Dendritic cell treated with granulocyte-macrophage colony-stimulating factor and Interleukin-4, amounts not matched to agents 40 ng/mL and 50 ng/mL, for 4 days (primary cell): ENCODE measurements at regions of chr11 and their contacts with region 1.

Region 1: DNA sequence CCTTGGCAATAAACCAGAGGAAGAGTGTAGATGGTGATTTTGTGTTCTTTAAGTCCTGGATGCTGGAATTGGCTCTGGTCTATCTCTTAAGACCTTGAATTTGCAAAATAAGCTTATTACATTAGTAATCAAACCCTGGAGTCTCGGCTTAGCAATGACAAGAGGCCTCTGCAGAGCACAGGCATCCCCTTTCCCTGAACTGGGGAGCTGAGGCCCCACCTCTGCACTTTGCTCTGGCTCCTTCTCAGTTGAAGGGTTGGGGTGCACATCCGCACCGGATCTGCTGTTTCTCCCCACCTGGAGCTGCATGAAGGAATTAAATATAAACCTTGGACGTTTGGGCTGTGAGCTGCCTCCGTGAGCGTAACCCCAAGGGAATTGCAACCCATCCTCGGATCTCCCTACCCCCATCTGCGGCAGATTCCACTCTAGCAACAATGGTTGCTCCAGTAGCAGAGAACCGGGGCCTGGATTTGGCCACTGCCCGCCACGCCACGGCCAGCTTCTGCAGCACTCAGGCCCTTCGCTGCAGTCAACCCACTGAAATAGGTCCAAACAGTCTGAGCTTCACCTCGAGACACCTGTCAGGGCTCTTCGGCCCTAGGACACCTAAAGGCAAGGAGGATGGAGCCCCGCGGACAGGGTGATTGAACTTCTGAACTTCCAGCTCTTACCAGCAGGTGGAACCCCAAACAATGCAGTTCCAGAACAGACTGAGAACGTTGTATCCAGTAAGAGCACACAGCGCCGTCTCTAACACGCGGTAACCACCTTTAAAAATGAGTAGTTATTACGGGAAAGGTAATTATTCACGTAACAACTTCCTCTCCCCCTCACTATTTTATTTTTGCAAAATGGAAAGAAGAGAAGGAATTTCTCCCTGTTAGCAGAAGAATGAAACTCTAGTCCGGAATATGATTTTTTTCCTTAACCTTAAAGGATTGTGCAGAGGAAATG is 54.8 kb upstream of the CAPRIN1 start:
- H3K4me3 Mint-ChIP-seq: peak overlapping the region; percentile 9
- H3K27ac Mint-ChIP-seq: no peak overlapping the region
- H3K4me1 Mint-ChIP-seq: peaks cover 12% of the 10 kb centered on the region
- H3K27me3 Mint-ChIP-seq: peaks cover 27% of the 10 kb centered on the region

Region 2: GRCh38 chr11:34037016-34037415 is 40.2 kb after region 1 on chr11:
- intact Hi-C with region 1: no loop called
- H3K4me3 Mint-ChIP-seq: no peak overlapping the region
- H3K27ac Mint-ChIP-seq: peak overlapping the region; percentile 77
- H3K4me1 Mint-ChIP-seq: peaks cover 16% of the 10 kb centered on the region
- H3K27me3 Mint-ChIP-seq: no peaks in the 10 kb centered on the region

Region 3: GRCh38 chr11:34075178-34075820 is 78.5 kb after region 1 on chr11:
- intact Hi-C with region 1: loop called (anchors 5 kb)
- H3K4me3 Mint-ChIP-seq: no peak overlapping the region
- H3K27ac Mint-ChIP-seq: no peak overlapping the region
- H3K4me1 Mint-ChIP-seq: no peaks in the 10 kb centered on the region
- H3K27me3 Mint-ChIP-seq: no peaks in the 10 kb centered on the region